Colonic mucosa (tissue), 4 donors: ENCODE measurements at regions of chr5 and their contacts with region 1.

Region 1: GRCh38 chr5:150544611-150545219 is 36.8 kb downstream of the NDST1 start:
- DNase-seq: peak; percentile 88
- H3K4me3 ChIP-seq: no peak overlapping the region
- H3K27ac ChIP-seq: no peak overlapping the region
- H3K4me1 ChIP-seq: peaks cover 8% of the 10 kb centered on the region
- H3K27me3 ChIP-seq: no peaks in the 10 kb centered on the region
- CTCF ChIP-seq: peak; percentile 93

Region 2: DNA sequence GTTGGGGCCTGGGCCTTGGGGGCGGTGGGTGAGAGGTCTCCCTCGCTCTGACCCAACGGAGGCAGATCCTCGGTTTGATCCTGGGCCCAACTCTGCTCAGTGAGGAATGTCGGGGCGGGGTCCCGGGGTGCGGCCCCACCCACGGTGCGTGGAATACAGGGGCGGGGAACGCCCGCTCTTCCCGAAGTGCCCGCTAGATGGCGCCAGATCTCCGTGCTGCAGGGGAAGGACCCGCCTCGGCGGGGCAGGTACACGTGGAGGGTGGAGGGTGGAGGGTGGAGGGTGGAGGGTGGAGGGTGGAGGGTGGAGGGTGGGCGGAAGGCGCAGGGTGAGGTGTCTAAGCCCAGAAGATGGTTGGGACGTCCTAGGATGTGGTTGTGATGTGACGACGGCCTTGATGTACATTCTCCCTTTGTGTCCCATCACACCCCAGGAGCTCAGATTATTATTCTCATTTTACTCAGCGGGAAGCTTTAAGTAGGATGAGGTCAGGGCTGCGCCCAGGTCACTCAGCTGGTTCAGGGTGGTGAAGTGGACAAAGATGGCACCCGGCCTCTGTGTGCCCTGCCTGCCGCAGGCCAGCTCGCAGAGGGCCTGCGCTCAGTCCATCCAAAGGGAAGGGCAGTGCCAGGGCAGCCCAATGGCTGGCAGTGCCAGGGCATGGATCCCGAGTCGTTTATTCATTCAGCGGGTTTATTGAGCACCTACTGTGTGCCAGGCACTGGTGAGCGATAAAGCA is 85.7 kb before region 1 on chr5:
- intact Hi-C with region 1: loop called (anchors 2 kb)
- DNase-seq: peak; percentile 89
- H3K4me3 ChIP-seq: no peak overlapping the region
- H3K27ac ChIP-seq: no peak overlapping the region
- H3K4me1 ChIP-seq: no peaks in the 10 kb centered on the region
- H3K27me3 ChIP-seq: no peaks in the 10 kb centered on the region
- CTCF ChIP-seq: peak; percentile 76

Region 3: DNA sequence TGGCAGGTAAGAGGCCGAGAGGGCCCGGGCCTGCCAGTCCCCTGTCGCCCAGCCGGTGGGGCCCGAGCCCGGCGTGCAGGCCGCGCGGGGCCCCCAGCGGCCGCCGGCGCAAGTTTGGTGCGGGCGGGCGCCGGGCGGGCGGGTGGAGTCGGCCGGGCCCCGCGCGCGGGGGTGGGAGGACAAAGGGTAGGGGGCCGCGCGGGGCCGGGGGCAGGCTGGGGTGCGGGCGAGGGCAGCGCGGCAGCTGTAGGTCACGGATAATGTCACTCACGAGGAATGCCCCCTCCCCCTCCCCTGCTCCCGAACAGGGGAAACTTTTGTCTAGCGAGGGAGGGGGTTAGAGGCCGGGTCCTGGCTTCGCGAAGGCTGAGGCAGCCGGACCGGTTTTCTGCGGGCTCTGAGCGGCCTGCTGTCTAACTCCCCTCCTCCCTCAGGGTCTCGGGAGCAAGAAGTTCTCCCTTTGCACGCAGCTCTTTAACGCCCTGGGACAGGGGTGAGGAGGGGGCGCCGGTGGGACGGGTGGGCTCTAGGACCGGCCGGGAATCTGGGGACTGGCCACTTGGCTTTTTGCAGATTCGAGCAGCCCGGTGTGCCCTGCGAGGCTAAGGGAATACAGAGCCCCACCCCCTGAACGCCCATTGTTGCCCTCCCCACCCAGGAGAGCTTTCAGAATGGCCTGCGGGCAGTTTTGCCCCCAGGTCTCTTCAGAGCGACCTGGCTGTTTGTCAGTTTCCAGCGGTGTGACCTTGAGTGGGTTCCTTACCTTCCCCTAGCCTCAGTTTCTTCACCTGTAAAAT is 58.1 kb before region 1 on chr5:
- intact Hi-C with region 1: loop called (anchors 5 kb)
- DNase-seq: peak; percentile 68
- H3K4me3 ChIP-seq: peak overlapping the region; percentile 93
- H3K27ac ChIP-seq: peak overlapping the region; percentile 89
- H3K4me1 ChIP-seq: peaks cover 22% of the 10 kb centered on the region
- H3K27me3 ChIP-seq: no peaks in the 10 kb centered on the region
- CTCF ChIP-seq: no peak